A549 (cell line): ENCODE measurements at regions of chr9 and their contacts with region 1.

Region 1: GRCh38 chr9:98207606-98208005 is 15.2 kb upstream of the CORO2A start:
- DNase-seq: no peak
- ATAC-seq: peak; percentile 31 to 40; a peak in 2 of 6 replicates
- H3K4me3 ChIP-seq: no peak overlapping the region
- H3K27ac ChIP-seq: no peak overlapping the region
- H3K4me1 ChIP-seq: peaks cover 3% of the 10 kb centered on the region; the same call in 1 of the 3 replicates
- CTCF ChIP-seq: no peak
- EP300 ChIP-seq: no peak
- POLR2A ChIP-seq: no peak
- RAD21 ChIP-seq: 0 out of 5 replicates have a peak, but pooled peaks of 1 of the 2 experiments have one; percentile 7

Region 2: GRCh38 chr9:98222885-98223640 is 15.5 kb after region 1 on chr9:
- CTCF ChIA-PET with region 1: interaction called, 53 read pairs
- POLR2A ChIA-PET with region 1: no interaction called
- DNase-seq: peak; percentile 72 to 79
- ATAC-seq: peak; percentile 76 to 88
- H3K4me3 ChIP-seq: no peak overlapping the region
- H3K27ac ChIP-seq: peak overlapping the region; percentile 82 to 86
- H3K4me1 ChIP-seq: peaks cover 75% of the 10 kb centered on the region
- CTCF ChIP-seq: no peak
- EP300 ChIP-seq: peak in 1 of 2 experiments; percentile 61; a peak in 1 of 5 replicates
- POLR2A ChIP-seq: no peak
- RAD21 ChIP-seq: peak in 1 of 2 experiments; percentile 7; a peak in 1 of 5 replicates

Region 3: GRCh38 chr9:98231770-98232478 is 24.3 kb after region 1 on chr9:
- CTCF ChIA-PET with region 1: interaction called, 62 read pairs
- POLR2A ChIA-PET with region 1: no interaction called
- DNase-seq: peak in 1 of 2 experiments; percentile 33
- ATAC-seq: peak; percentile 88 to 92
- H3K4me3 ChIP-seq: no peak overlapping the region
- H3K27ac ChIP-seq: peak overlapping the region; percentile 44 to 68; a peak in 5 of 6 replicates
- H3K4me1 ChIP-seq: peaks cover 58% of the 10 kb centered on the region
- CTCF ChIP-seq: no peak
- EP300 ChIP-seq: no peak
- POLR2A ChIP-seq: no peak
- RAD21 ChIP-seq: no peak

Region 4: GRCh38 chr9:98255578-98256296 is 48.1 kb after region 1 on chr9 and contains the start of gene TBC1D2:
- CTCF ChIA-PET with region 1: interaction called, 44 read pairs
- POLR2A ChIA-PET with region 1: interaction called, 5 read pairs
- DNase-seq: peak; percentile 92 to 94
- ATAC-seq: peak; percentile 85 to 94
- H3K4me3 ChIP-seq: peak within 1 kb of the TSS; percentile 79
- H3K27ac ChIP-seq: peak within 1 kb of the TSS; percentile 86 to 90
- H3K4me1 ChIP-seq: peaks cover 45% of the 10 kb centered on the region
- CTCF ChIP-seq: no peak
- EP300 ChIP-seq: no peak
- POLR2A ChIP-seq: peak; percentile 83
- RAD21 ChIP-seq: no peak
- polyA plus RNA-seq, gene TBC1D2: 3.3 and 4.1 TPM in 2 replicates

Region 5: GRCh38 chr9:98300613-98301012 is 93.0 kb after region 1 on chr9:
- CTCF ChIA-PET with region 1: no interaction called
- POLR2A ChIA-PET with region 1: no interaction called
- DNase-seq: no peak
- ATAC-seq: no peak
- H3K4me3 ChIP-seq: no peak overlapping the region
- H3K27ac ChIP-seq: no peak overlapping the region
- H3K4me1 ChIP-seq: no peaks in the 10 kb centered on the region
- CTCF ChIP-seq: no peak
- EP300 ChIP-seq: no peak
- POLR2A ChIP-seq: no peak
- RAD21 ChIP-seq: no peak

Region 6: GRCh38 chr9:98357921-98358535 is 150.4 kb after region 1 on chr9:
- CTCF ChIA-PET with region 1: no interaction called
- POLR2A ChIA-PET with region 1: no interaction called
- DNase-seq: peak in 1 of 2 experiments; percentile 20
- ATAC-seq: peak; percentile 64 to 71; a peak in 4 of 6 replicates
- H3K4me3 ChIP-seq: no peak overlapping the region
- H3K27ac ChIP-seq: no peak overlapping the region
- H3K4me1 ChIP-seq: no peaks in the 10 kb centered on the region
- CTCF ChIP-seq: no peak
- EP300 ChIP-seq: no peak
- POLR2A ChIP-seq: no peak
- RAD21 ChIP-seq: no peak